GM10248 (cell line): ENCODE measurements at regions of chr13 and their contacts with region 1.

Region 1: GRCh38 chr13:32472194-32472621 is 44.3 kb upstream of the N4BP2L1 start:
- DNase-seq: peak; percentile 53
- CTCF ChIP-seq: no peak

Region 2: GRCh38 chr13:31649766-31650165 is 822.4 kb before region 1 on chr13:
- CTCF ChIA-PET with region 1: no interaction called
- POLR2A ChIA-PET with region 1: no interaction called
- DNase-seq: no peak
- CTCF ChIP-seq: no peak

Region 3: DNA sequence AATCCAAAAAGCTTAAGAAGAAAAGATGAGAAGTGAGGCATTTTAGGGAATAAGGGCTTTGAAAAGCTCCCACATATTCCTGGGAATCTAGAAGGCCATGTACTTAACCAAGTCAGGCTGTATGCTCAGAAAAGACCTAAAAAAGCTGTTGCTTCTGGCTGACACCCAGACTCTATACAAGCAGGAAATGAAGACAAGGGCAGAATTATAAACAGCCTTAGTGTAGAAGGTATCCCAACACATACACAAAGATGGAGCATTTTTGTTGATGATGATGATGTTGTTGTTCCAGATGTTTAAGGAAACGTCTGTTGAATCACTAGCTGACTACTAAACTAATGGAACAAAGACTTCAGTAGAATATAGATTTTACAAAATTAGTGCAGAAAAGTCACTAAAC is 18.2 kb before region 1 on chr13:
- CTCF ChIA-PET with region 1: interaction called, 10 read pairs
- POLR2A ChIA-PET with region 1: no interaction called
- DNase-seq: no peak
- CTCF ChIP-seq: no peak

Region 4: DNA sequence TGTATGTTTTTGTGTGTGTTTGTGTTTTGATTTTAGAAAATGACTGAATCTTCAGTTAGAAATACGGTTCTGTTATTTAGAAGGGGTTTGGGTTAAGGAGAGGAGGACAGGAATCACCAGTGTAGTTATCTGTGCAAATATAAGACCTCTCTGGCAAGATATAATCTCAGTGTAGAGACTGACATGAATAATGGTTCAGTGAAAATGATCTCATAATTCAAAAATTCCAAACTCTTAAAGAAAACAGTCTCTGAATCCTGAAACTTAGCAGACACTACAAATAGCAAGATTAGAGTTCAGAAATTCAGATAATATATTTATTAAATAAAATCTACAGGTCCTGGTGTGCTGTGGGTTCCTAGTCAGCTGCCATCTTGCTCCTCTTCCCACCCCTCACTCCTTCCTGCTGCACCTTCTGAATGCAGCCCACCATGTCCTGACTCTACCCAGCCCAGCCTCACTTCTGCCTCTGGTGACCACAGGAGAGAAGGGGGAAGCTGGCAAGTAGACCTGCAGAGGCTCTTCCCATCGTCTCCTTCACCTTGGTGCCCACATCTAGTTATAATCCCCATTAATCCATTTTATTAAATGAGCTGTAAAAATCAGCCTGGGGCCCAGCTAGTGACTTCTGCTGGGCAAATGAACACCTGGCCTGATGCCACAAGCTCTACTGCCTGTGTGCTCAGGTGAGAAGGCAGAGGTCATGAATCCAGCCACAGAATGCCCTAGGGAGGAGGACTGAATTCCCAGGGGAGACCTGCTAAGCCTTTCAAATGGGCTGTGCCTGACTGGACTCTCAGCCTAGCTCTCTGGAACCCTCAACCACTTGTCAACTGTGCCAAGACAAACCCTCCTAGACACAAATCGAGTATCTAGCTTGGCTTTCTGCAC is 187.8 kb after region 1 on chr13:
- CTCF ChIA-PET with region 1: no interaction called
- POLR2A ChIA-PET with region 1: no interaction called
- DNase-seq: no peak
- CTCF ChIP-seq: no peak